Heart right ventricle (tissue), 16 donors: ENCODE measurements at regions of chr10 and their contacts with region 1.

Region 1: GRCh38 chr10:35126530-35127296 is at the start of gene CREM:
- DNase-seq: peak; percentile 99 to 100
- ATAC-seq: peak; percentile 94 to 99 (median 97)
- H3K4me3 ChIP-seq: peak within 1 kb of the TSS; percentile 57 to 92 (median 82)
- H3K27ac ChIP-seq: peak within 1 kb of the TSS; percentile 97 to 100 (median 100)
- H3K4me1 ChIP-seq: peaks cover 3 to 38% (median 21%) of the 10 kb centered on the region in 9 donors
- H3K27me3 ChIP-seq: no peaks in the 10 kb centered on the region
- CTCF ChIP-seq: peak; percentile 84 to 96 (median 88)
- total RNA-seq, gene CREM: 44.1 to 91.7 (median 57.6) TPM

Region 2: DNA sequence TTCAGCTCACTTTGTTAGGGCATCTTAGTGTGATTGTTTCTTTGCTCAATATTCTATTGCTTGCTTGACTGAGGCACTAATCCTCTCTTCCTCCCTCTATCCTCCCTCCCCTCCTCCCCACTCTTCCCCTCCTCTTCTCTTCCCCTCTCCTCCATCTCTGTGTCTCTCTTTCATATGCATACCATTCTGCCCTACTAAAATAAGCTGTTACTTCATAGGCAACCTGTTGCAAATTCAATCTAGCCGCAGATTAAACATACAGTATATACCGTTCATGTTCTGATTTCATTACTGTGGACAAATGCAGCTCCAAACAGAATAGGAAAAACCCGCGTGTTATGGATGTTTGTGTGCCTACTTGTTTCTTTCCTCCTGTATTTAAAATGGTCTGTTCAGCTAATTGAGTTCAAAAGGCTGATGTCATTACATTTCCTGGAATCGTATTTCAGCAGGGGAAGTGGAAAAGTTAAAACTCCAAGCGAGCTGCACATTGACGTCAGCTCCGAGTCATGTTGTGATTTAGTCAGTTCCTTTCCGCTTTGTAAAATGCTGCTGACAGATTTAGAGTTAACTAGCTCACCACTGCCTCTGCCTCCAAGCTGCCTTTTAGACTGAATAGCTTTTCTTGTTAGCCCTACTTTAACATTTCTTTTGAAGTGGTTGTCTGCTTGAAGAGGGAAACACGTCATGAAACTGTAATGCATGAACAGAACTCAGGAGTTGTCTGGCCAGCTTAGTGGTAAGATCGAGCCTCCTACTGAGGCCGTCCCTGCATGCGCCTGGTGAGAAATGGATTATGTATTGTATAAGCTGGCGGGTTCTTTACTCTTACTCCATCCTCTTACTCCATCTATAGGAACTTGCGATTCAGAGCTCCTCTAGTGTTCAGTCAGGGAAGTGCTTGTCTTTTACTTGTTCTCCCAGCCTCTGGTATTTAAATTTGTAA is 68.9 kb after region 1 on chr10:
- intact Hi-C with region 1: loop called in 9 of 10 experiments (anchors 1 to 5 kb)
- DNase-seq: peak; percentile 30 to 91
- ATAC-seq: peak; percentile 85 to 93 (median 91)
- H3K4me3 ChIP-seq: peak overlapping the region; percentile 22 to 68 (median 55)
- H3K27ac ChIP-seq: peak overlapping the region; percentile 82 to 97 (median 95)
- H3K4me1 ChIP-seq: peaks cover 0 to 62% (median 11%) of the 10 kb centered on the region in 9 donors
- H3K27me3 ChIP-seq: no peaks in the 10 kb centered on the region
- CTCF ChIP-seq: peak; percentile 74 to 92 (median 83)